ENCODE measurements at regions of chr7 and their contacts with region 1.

Region 1: GRCh38 chr7:106659963-106660861 is 746 bp downstream of the CCDC71L start:
- DNase-seq: peak; percentile 91
- CTCF ChIP-seq: peak; percentile 97

Region 2: GRCh38 chr7:106176414-106177299 is 483.6 kb before region 1 on chr7:
- in situ Hi-C with region 1: loop called (anchors 25 kb)
- DNase-seq: peak; percentile 69
- CTCF ChIP-seq: peak; percentile 97

Region 3: GRCh38 chr7:106425017-106425719 is 235.0 kb before region 1 on chr7:
- in situ Hi-C with region 1: no loop called
- DNase-seq: peak; percentile 78
- CTCF ChIP-seq: no peak